ENCODE measurements at regions of chr10 and their contacts with region 1.

Region 1: GRCh38 chr10:61140765-61141392 is 196.9 kb upstream of the RHOBTB1 start:
- DNase-seq: peak; percentile 19 to 69
- ATAC-seq: peak; percentile 64 to 86; a peak in 5 of 6 replicates
- H3K4me3 ChIP-seq: no peak overlapping the region
- H3K27ac ChIP-seq: no peak overlapping the region
- H3K4me1 ChIP-seq: 0 out of 3 replicates have a peak, but pooled peaks cover 5% of the 10 kb centered on the region
- CTCF ChIP-seq: peak; percentile 69
- EP300 ChIP-seq: no peak
- POLR2A ChIP-seq: no peak
- RAD21 ChIP-seq: peak; percentile 70 to 74

Region 2: DNA sequence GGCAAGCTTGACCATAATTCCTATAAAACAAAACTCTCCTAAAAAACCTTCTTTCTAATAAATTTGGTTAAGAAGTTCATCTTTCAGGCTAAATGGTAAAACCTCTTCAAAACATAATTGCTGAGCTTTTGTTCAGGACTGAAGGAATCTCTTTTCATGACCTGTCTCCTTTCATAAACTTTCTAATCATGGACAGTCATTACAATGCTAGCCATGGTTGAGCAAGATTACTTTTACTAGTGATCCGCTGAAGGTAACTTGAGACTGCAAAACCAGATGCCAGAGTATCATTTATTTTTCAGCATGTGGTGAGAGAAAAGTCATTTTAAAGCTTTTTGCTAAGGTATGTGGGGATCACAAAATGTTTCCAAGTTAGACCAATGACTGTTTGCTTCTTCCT is 10.5 kb before region 1 on chr10:
- CTCF ChIA-PET with region 1: interaction called, 11 read pairs
- POLR2A ChIA-PET with region 1: no interaction called
- DNase-seq: no peak
- ATAC-seq: no peak
- H3K4me3 ChIP-seq: no peak overlapping the region
- H3K27ac ChIP-seq: no peak overlapping the region
- H3K4me1 ChIP-seq: no peaks in the 10 kb centered on the region
- CTCF ChIP-seq: no peak
- EP300 ChIP-seq: no peak
- POLR2A ChIP-seq: no peak
- RAD21 ChIP-seq: no peak

Region 3: DNA sequence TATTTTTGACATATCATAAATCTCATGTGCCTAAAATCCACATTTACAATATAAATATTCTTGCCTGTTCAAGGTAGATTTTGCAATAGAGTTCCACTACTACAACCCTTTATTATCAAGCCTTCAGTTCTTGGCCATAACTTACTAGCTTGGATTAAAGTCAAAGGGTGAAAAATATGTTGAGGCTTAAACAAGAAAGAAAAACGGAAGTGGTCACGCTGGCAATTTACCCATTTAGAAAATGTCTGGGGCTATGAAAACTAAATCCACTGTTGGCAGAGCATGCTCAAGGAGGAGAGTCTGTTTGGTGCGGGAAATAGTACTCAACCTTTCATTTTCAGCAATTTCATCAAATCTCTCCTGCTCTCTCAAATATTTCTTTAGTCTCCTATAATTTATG is 12.9 kb after region 1 on chr10:
- CTCF ChIA-PET with region 1: interaction called, 10 read pairs
- POLR2A ChIA-PET with region 1: no interaction called
- DNase-seq: no peak
- ATAC-seq: no peak
- H3K4me3 ChIP-seq: no peak overlapping the region
- H3K27ac ChIP-seq: no peak overlapping the region
- H3K4me1 ChIP-seq: no peaks in the 10 kb centered on the region
- CTCF ChIP-seq: no peak
- EP300 ChIP-seq: no peak
- POLR2A ChIP-seq: no peak
- RAD21 ChIP-seq: no peak

Region 4: DNA sequence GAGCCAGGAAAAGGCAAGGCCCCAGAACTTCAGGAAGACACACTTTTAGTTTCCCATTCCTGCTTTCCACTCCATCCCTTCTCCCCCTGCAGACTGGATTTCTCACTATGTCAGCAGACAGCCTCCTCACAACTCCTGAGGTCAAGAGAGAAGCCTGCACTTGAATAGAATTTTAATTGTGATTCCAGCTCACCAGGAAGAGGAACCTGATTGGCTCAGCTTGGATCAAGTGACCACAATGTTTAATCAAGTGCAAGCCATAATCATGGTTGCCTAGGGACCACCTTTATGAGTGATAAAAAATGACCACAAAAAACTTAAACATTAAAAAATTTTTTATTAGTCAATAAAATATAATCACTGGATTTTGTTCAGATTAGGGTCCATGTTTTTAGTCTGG is 47.8 kb after region 1 on chr10:
- CTCF ChIA-PET with region 1: interaction called, 11 read pairs
- POLR2A ChIA-PET with region 1: no interaction called
- DNase-seq: no peak
- ATAC-seq: no peak
- H3K4me3 ChIP-seq: no peak overlapping the region
- H3K27ac ChIP-seq: no peak overlapping the region
- H3K4me1 ChIP-seq: no peaks in the 10 kb centered on the region
- CTCF ChIP-seq: no peak
- EP300 ChIP-seq: no peak
- POLR2A ChIP-seq: no peak
- RAD21 ChIP-seq: no peak